PC-3 (cell line): ENCODE measurements at regions of chrX and their contacts with region 1.

Region 1: GRCh38 chrX:106397801-106398538 is 213.8 kb upstream of the RADX start:
- DNase-seq: peak; percentile 67
- ATAC-seq: peak; percentile 79
- H3K4me3 ChIP-seq: no peak overlapping the region
- H3K27ac ChIP-seq: no peak overlapping the region
- H3K4me1 ChIP-seq: no peaks in the 10 kb centered on the region
- H3K27me3 ChIP-seq: no peaks in the 10 kb centered on the region
- CTCF ChIP-seq: peak; percentile 63

Region 2: GRCh38 chrX:105975382-105975781 is 422.6 kb before region 1 on chrX:
- CTCF ChIA-PET with region 1: no interaction called
- POLR2A ChIA-PET with region 1: no interaction called
- intact Hi-C with region 1: loop called (anchors 2 kb)
- DNase-seq: peak; percentile 50
- ATAC-seq: peak; percentile 46; the same call in 1 of the 2 replicates
- H3K4me3 ChIP-seq: no peak overlapping the region
- H3K27ac ChIP-seq: no peak overlapping the region
- H3K4me1 ChIP-seq: no peaks in the 10 kb centered on the region
- H3K27me3 ChIP-seq: peaks cover 4% of the 10 kb centered on the region; the same call in 1 of the 2 replicates
- CTCF ChIP-seq: peak; percentile 65

Region 3: GRCh38 chrX:106039920-106040319 is 358.1 kb before region 1 on chrX:
- CTCF ChIA-PET with region 1: no interaction called
- POLR2A ChIA-PET with region 1: no interaction called
- intact Hi-C with region 1: loop called (anchors 5 kb)
- DNase-seq: peak; percentile 55
- ATAC-seq: peak; percentile 71
- H3K4me3 ChIP-seq: no peak overlapping the region
- H3K27ac ChIP-seq: no peak overlapping the region
- H3K4me1 ChIP-seq: peaks cover 12% of the 10 kb centered on the region; the same call in 1 of the 2 replicates
- H3K27me3 ChIP-seq: 0 out of 2 replicates have a peak, but pooled peaks cover 7% of the 10 kb centered on the region
- CTCF ChIP-seq: peak; percentile 57

Region 4: GRCh38 chrX:106170318-106170717 is 227.7 kb before region 1 on chrX:
- CTCF ChIA-PET with region 1: interaction called, 3 read pairs
- POLR2A ChIA-PET with region 1: no interaction called
- intact Hi-C with region 1: loop called (anchors 1 kb)
- DNase-seq: peak; percentile 53
- ATAC-seq: peak; percentile 51; the same call in 1 of the 2 replicates
- H3K4me3 ChIP-seq: no peak overlapping the region
- H3K27ac ChIP-seq: no peak overlapping the region
- H3K4me1 ChIP-seq: no peaks in the 10 kb centered on the region
- H3K27me3 ChIP-seq: peaks cover 37% of the 10 kb centered on the region
- CTCF ChIP-seq: peak; percentile 69

Region 5: DNA sequence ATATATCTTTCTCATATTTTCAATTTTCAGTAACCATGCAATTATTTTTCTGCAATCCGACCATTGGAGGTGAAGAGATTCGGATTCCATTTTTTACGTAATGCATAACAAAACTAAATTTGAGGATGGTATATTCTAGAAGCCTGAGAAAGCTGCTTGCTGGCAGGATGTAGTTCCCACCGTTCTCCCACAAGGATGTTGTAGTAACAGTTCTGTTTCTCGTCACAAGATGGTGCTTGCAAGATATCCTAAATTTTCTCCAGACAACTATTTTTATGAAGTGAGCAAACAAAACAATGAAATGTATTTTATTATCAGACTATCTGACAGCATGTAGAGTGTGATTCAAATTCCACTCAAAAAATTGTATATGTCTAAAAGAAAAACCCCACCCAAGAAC is 219.1 kb before region 1 on chrX:
- CTCF ChIA-PET with region 1: no interaction called
- POLR2A ChIA-PET with region 1: no interaction called
- intact Hi-C with region 1: loop called (anchors 2 kb)
- DNase-seq: peak; percentile 18
- ATAC-seq: peak; percentile 56
- H3K4me3 ChIP-seq: no peak overlapping the region
- H3K27ac ChIP-seq: no peak overlapping the region
- H3K4me1 ChIP-seq: no peaks in the 10 kb centered on the region
- H3K27me3 ChIP-seq: peaks cover 10% of the 10 kb centered on the region; the same call in 1 of the 2 replicates
- CTCF ChIP-seq: peak; percentile 43; the same call in 1 of the 2 replicates

Region 6: GRCh38 chrX:106201502-106202178 is 196.3 kb before region 1 on chrX:
- CTCF ChIA-PET with region 1: no interaction called
- POLR2A ChIA-PET with region 1: no interaction called
- intact Hi-C with region 1: loop called (anchors 10 kb)
- DNase-seq: no peak
- ATAC-seq: no peak
- H3K4me3 ChIP-seq: no peak overlapping the region
- H3K27ac ChIP-seq: no peak overlapping the region
- H3K4me1 ChIP-seq: peaks cover 5% of the 10 kb centered on the region; the same call in 1 of the 2 replicates
- H3K27me3 ChIP-seq: no peaks in the 10 kb centered on the region
- CTCF ChIP-seq: no peak

Region 7: GRCh38 chrX:106302242-106302662 is 95.7 kb before region 1 on chrX:
- CTCF ChIA-PET with region 1: no interaction called
- POLR2A ChIA-PET with region 1: no interaction called
- intact Hi-C with region 1: no loop called
- DNase-seq: peak; percentile 94
- ATAC-seq: peak; percentile 67
- H3K4me3 ChIP-seq: no peak overlapping the region
- H3K27ac ChIP-seq: peak overlapping the region; percentile 99
- H3K4me1 ChIP-seq: peaks cover 27% of the 10 kb centered on the region
- H3K27me3 ChIP-seq: no peaks in the 10 kb centered on the region
- CTCF ChIP-seq: no peak

Region 8: DNA sequence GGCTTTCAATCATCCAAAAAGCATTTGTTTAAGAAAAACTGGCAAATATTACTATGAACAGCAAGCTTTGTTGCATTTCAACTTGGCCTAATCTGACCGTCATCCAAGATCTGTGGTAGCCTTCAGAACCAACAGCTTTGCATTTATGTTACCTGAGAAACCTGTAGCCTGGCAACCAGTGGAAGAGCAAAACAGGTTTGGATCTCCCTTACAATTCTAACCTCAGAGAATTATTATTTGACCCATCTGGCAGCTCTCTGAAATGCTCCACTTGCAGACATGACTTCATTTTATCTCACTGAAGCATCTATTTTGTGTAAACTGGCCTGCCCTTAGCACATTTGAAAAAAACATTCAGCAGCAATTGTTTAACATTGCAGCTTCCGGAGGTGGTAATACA is 80.2 kb before region 1 on chrX:
- CTCF ChIA-PET with region 1: no interaction called
- POLR2A ChIA-PET with region 1: no interaction called
- intact Hi-C with region 1: loop called (anchors 10 kb)
- DNase-seq: no peak
- ATAC-seq: no peak
- H3K4me3 ChIP-seq: no peak overlapping the region
- H3K27ac ChIP-seq: no peak overlapping the region
- H3K4me1 ChIP-seq: no peaks in the 10 kb centered on the region
- H3K27me3 ChIP-seq: no peaks in the 10 kb centered on the region
- CTCF ChIP-seq: no peak